ENCODE measurements at regions of chr12 and their contacts with region 1.

Region 1: DNA sequence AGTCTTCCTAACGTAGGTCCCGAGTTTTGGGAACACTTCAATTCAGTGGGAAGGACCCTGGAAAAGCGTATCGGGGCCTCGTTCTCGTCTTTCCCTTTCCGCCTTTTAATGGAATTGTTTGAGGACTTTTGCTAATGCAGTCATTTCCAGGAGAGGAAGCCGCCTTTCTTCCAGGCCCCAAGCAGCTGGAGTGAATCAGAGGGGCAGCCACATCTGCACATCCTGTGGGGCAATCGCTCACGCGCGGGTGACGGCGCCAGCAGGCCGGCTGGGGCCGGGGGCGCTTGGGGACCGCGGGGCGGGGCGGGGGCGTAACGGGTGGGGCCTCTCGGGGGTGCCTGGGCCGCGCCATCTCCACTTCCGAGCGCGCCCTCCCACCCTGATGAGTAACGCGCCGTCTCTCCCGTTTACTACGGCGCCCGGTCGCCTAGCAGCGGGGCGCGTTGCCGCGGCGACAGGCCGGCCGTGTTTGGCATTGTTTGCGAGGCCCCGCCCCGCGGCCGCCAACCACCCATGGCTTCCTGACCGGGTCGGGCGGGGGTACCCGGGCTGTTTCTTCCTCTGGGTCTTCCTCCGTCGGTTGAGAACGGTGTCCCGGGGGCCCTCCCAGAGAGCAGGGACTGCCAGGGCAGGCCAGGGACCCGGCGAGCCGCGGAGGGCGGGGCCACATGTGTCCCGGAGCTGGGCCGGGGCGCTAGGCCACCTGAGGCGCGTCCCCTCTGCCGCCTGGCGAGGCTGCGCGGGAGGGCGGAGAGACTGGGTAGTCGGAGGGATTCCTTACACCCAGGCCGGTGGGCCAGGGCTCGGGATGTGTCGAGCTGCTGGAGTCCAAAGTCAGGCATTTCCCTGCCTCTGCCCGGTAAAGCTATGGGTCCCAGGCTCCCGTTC is 2.3 kb downstream of the GSG1 start:
- DNase-seq: peak; percentile 91
- H3K4me3 Mint-ChIP-seq: peak overlapping the region; percentile 63
- H3K27ac Mint-ChIP-seq: peak overlapping the region; percentile 70
- H3K4me1 Mint-ChIP-seq: peaks cover 49% of the 10 kb centered on the region
- H3K27me3 Mint-ChIP-seq: no peaks in the 10 kb centered on the region

Region 2: GRCh38 chr12:12803186-12803585 is 297.9 kb before region 1 on chr12:
- CTCF ChIA-PET with region 1: no interaction called
- intact Hi-C with region 1: loop called (anchors 1 kb)
- DNase-seq: peak; percentile 61
- H3K4me3 Mint-ChIP-seq: no peak overlapping the region
- H3K27ac Mint-ChIP-seq: no peak overlapping the region
- H3K4me1 Mint-ChIP-seq: peaks cover 53% of the 10 kb centered on the region
- H3K27me3 Mint-ChIP-seq: no peaks in the 10 kb centered on the region

Region 3: DNA sequence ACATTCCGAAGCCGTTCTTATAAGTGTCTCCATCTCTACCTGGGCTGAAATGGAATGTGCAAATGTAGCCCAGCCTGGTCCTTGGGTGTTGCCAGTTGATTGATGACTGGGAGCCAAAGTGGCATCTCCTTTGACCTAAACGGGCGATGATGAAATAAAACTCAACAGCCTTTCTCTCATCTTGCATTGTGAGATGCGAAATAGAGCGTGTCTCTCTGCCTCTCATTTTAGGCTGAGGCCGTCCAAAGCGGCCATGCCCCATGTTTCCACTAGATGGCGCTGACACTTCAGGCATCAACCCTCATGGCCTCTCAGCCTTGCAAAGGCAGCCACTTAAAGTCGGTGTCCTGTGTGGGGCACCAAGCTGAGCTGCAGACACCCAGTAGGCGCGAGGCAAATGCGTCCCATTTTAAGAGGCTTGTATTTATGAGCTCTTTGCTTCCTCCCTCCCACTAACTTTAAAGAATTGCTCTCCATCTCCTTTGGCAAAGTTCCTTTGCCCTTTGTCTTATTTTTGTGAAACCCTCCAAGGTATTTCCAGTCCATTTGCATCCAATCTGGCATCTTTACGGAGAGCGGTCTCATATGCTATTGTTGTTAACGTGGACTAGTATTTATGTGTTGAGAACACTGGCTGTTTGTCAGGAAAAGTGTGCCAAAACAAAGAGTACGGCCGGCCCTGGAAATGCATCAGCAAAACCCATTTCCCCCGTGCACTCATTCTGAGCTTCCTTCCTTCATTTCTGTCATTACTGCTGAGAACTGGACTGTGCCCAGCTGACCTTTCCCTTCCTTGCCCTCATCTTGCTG is 184.8 kb before region 1 on chr12:
- CTCF ChIA-PET with region 1: interaction called, 15 read pairs
- intact Hi-C with region 1: loop called (anchors 1 kb)
- DNase-seq: peak; percentile 94
- H3K4me3 Mint-ChIP-seq: no peak overlapping the region
- H3K27ac Mint-ChIP-seq: no peak overlapping the region
- H3K4me1 Mint-ChIP-seq: peaks cover 7% of the 10 kb centered on the region
- H3K27me3 Mint-ChIP-seq: peaks cover 6% of the 10 kb centered on the region

Region 4: DNA sequence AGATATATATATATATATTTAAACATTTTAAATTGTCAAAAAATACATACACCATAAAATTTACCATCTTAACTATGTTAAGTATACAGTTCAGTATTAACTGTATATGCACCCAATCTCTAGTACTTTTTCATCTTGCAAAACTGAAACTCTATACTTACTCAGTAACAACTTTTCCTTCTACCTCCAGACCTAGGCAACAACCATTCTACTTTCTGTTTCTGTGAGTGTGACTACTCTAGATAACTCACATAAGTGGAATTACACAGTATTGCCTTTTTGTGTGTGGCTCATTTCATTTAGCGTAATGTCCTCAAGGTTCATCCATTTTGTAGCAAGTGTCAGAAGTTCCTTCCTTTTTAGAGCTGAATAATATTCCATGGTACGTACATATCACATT is 48.7 kb before region 1 on chr12:
- CTCF ChIA-PET with region 1: no interaction called
- intact Hi-C with region 1: loop called (anchors 1 kb)
- DNase-seq: no peak
- H3K4me3 Mint-ChIP-seq: no peak overlapping the region
- H3K27ac Mint-ChIP-seq: no peak overlapping the region
- H3K4me1 Mint-ChIP-seq: peaks cover 4% of the 10 kb centered on the region
- H3K27me3 Mint-ChIP-seq: no peaks in the 10 kb centered on the region

Region 5: DNA sequence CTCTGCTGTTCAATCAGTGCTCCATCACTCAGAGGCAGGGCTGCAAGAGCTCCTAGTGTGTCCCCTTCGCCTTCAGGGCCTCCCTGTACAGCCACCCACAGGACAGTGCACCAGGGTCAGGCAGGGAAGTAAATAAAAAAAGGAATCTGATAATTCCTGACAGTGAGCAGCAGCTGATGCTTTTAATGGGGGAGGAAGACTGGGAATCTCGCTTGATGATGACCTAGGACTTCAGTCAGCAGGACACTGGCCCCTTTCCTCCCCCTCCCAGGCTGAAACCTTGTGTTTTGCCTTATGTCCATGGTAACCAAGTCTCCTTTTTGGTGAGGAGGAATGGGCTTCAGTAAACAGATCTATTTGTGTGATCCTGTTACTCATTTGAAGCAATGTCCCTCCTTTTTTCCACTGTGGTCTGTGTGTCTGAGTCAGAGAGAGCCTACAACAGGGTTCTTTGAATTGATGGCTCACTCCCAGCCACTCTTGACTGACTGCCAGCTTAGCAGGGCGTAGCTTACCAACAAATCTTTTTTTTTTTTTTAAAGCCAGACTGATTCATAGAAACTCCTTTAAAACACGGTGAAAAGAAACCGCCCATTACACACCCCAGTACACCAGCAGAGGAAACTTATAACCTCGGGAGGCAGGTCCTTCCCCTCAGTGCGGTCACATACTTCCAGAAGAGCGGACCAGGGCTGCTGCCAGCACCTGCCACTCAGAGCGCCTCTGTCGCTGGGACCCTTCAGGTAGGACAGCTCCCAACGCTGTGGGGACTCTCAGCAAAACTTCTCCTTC is 95.2 kb after region 1 on chr12 and contains the start of gene EMP1:
- CTCF ChIA-PET with region 1: interaction called, 4 read pairs
- intact Hi-C with region 1: loop called (anchors 1 kb)
- DNase-seq: peak; percentile 93
- H3K4me3 Mint-ChIP-seq: peak within 1 kb of the TSS; percentile 72
- H3K27ac Mint-ChIP-seq: peak within 1 kb of the TSS; percentile 38
- H3K4me1 Mint-ChIP-seq: peaks cover 20% of the 10 kb centered on the region
- H3K27me3 Mint-ChIP-seq: peaks cover 4% of the 10 kb centered on the region
- total RNA-seq, gene EMP1: 3.0 to 4.0 TPM

Measured in activated naive CD4-positive, alpha-beta T cell treated with anti-CD3 and anti-CD28 coated beads for 36 hours (primary cell).